Astrocyte of the cerebellum (primary cell): ENCODE measurements at regions of chr6 and their contacts with region 1.

Region 1: GRCh38 chr6:149903938-149904611 is 6.2 kb upstream of the RAET1E start:
- DNase-seq: no peak
- H3K4me3 ChIP-seq: no peak overlapping the region
- CTCF ChIP-seq: no peak

Region 2: GRCh38 chr6:149852180-149852579 is 51.9 kb before region 1 on chr6:
- in situ Hi-C with region 1: loop called (anchors 10 kb)
- DNase-seq: no peak
- H3K4me3 ChIP-seq: no peak overlapping the region
- CTCF ChIP-seq: no peak

Region 3: DNA sequence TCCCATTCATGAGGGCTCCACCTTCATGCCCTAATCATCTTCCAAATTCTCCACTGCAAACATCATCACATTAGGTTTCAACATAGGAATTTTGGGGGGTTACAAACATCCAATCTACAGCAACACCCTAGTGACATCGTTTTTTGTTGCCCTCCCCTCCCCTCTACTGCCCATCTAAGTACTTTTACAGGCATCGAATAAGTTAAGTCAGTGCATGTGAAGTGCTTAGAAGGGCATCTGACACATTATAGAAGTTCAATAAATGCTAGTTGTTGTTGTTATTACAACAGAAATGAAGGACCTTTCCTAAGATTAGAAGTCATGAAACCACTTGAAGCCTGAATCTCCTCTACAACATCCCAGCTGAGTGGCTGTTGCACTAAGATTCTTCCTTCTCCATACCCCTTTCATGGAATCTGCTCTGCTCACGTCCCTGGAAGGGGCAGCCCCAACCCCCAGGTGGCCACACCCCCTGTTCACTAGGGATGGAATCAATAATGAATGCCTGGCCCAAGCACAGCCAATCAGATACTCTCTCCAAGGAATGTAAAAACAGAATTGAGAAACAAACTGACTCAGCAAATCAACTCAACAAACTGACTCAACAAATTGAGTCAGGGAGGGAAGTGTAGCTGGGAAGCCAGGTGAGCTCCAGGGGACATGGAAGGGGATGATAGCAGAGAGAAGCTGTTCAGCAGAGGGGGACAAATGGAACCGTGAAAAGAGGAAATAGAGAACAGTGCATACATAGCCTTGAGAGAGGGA is 36.0 kb before region 1 on chr6:
- in situ Hi-C with region 1: no loop called
- DNase-seq: no peak
- H3K4me3 ChIP-seq: no peak overlapping the region
- CTCF ChIP-seq: no peak